PC-3 (cell line): ENCODE measurements at regions of chr5 and their contacts with region 1.

Region 1: GRCh38 chr5:58156986-58157701 is 302.7 kb downstream of the PLK2 start:
- DNase-seq: no peak
- ATAC-seq: no peak
- H3K4me3 ChIP-seq: no peak overlapping the region
- H3K27ac ChIP-seq: no peak overlapping the region
- H3K4me1 ChIP-seq: peaks cover 3% of the 10 kb centered on the region; the same call in 1 of the 2 replicates
- H3K27me3 ChIP-seq: no peaks in the 10 kb centered on the region
- CTCF ChIP-seq: no peak

Region 2: GRCh38 chr5:58012102-58012501 is 145.0 kb before region 1 on chr5:
- CTCF ChIA-PET with region 1: no interaction called
- POLR2A ChIA-PET with region 1: interaction called, 13 read pairs
- intact Hi-C with region 1: no loop called
- DNase-seq: peak; percentile 6
- ATAC-seq: 0 out of 2 replicates have a peak, but pooled peaks have one; percentile 31
- H3K4me3 ChIP-seq: no peak overlapping the region
- H3K27ac ChIP-seq: no peak overlapping the region
- H3K4me1 ChIP-seq: no peaks in the 10 kb centered on the region
- H3K27me3 ChIP-seq: no peaks in the 10 kb centered on the region
- CTCF ChIP-seq: no peak